ENCODE measurements at regions of chr9 and their contacts with region 1.

Region 1: DNA sequence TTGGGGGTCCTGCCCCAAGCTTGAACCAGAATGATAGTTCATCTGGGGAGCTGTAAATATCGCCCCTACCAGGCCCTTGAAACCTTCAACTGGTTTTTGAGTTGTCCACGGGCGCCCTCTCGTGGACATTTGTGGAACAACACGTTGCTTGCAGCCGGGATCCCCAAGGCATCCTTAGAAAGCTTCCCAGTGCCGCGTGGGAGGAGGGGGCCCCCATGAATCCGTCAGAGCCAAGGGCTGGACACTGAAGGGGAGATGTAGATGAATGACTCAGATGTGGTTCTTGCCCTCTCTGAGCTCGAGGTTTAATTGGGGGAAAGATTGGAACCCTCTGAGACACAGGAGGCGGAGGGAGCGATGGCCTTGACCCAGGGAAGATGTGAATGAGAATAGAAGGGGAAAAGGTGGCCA is 31.8 kb upstream of the ORM1 start:
- DNase-seq: peak; percentile 90

Region 2: GRCh38 chr9:114072184-114073140 is 218.6 kb before region 1 on chr9:
- intact Hi-C with region 1: no loop called
- DNase-seq: peak; percentile 86

Region 3: DNA sequence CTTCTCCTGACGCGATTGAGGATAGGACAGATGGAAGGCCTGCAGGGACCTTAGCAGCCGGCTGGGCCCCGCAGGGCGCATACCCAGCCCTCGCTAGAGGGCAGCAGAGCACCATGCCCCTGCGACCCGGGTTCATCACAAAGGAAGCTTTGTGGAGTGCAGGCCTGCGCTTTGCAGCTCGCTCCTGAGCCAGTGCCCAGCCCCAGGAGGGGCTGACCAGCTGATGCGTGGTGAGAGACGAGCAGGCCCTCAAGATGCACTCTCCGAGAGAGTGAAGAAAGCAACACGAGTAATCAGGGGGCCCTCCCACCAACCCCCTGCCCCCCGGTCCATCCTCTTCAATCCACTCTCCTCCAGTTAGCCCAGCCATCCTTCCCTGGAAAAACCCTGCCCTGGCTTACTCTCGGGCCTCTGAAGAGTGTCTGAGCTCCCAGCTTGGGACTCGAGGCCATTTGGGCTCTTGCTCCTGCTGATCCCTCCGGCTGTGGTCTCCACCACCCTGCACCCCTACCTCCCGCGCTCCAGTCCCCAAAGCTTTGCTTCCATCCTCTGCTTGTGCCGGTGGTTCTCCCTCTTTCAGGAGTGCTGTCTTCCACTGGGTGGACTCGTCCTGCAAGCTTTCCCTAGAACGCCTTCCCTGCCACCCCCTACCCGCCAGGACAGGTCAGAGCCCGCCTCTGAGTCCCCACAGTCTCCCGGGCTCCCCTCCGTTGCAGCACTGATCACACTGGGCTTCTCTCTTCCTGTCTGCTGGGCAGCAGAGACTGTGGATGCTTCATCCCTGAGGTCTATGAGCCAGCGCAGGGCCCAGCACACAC is 182.8 kb before region 1 on chr9:
- intact Hi-C with region 1: loop called in 1 of 2 experiments (anchors 5 kb)
- DNase-seq: peak; percentile 91

Measured in posterior vena cava (tissue), 2 donors.